Sigmoid colon (tissue), 7 donors: ENCODE measurements at regions of chr1 and their contacts with region 1.

Region 1: DNA sequence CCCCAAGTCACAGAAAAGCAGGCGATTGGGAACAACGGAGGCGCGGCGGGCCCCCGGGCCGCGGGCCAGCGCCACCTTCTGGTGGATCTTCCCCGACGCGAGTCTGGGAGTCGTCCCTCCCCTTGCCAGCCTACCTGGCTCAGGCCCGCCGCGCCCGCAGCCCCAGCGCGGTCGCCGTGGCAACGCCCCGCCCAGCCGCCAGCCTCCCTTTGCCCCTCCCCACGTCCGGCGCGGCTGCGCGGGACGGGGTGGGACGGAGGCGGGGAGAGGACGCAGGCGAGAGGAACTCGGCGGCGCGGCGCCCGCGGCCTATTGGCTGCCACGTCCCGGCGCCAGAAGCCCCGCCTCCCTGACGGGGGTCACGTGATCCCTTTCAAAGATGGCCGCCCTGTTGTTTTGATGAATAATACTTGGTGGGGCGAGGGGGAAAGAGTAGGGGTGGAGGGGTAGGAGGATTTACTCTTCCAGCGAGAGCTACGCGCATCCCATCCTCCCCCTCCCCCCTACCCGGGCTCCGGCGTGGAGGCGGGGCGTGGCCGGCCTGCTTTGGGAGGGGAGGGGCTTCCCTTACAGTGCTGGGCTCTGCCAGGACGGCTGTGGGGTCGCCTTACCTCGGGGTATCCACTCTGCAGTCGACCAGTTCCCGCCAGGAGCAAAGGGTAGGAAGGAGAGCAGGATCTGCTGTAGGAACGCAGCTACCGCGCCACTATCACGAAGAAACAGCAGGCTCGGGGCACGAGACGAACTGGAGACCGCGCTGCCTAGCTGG is at the start of gene UBE4B:
- DNase-seq: peak; percentile 98
- H3K4me3 ChIP-seq: peak within 1 kb of the TSS; percentile 95 to 97 (median 96)
- H3K27ac ChIP-seq: peak within 1 kb of the TSS; percentile 91 to 98 (median 96)
- H3K4me1 ChIP-seq: peaks cover 0 to 28% (median 21%) of the 10 kb centered on the region in 4 donors
- H3K27me3 ChIP-seq: no peaks in the 10 kb centered on the region
- CTCF ChIP-seq: peak in 3 of 4 experiments; percentile 58 to 75 (median 69)
- EP300 ChIP-seq: no peak
- POLR2A ChIP-seq: peak in 1 of 2 donors; percentile 33
- total RNA-seq, gene UBE4B: 47.8 to 124 (median 59.4) TPM

Region 2: GRCh38 chr1:9874959-9875635 is 157.7 kb before region 1 on chr1:
- intact Hi-C with region 1: loop called (anchors 1 kb)
- DNase-seq: peak; percentile 83
- H3K4me3 ChIP-seq: peak overlapping the region in 3 of 4 donors; percentile 6 to 39 (median 33)
- H3K27ac ChIP-seq: peak overlapping the region; percentile 19 to 64 (median 56)
- H3K4me1 ChIP-seq: peaks cover 0 to 17% (median 9%) of the 10 kb centered on the region in 4 donors
- H3K27me3 ChIP-seq: no peaks in the 10 kb centered on the region
- CTCF ChIP-seq: peak; percentile 78 to 95 (median 92)
- EP300 ChIP-seq: no peak
- POLR2A ChIP-seq: no peak

Region 3: GRCh38 chr1:10007169-10007568 is 25.6 kb before region 1 on chr1:
- intact Hi-C with region 1: no loop called
- DNase-seq: no peak
- H3K4me3 ChIP-seq: no peak overlapping the region
- H3K27ac ChIP-seq: no peak overlapping the region
- H3K4me1 ChIP-seq: no peaks in the 10 kb centered on the region
- H3K27me3 ChIP-seq: peaks cover 0 to under 1% (median 0%) of the 10 kb centered on the region in 3 donors
- CTCF ChIP-seq: no peak
- EP300 ChIP-seq: no peak
- POLR2A ChIP-seq: no peak

Region 4: DNA sequence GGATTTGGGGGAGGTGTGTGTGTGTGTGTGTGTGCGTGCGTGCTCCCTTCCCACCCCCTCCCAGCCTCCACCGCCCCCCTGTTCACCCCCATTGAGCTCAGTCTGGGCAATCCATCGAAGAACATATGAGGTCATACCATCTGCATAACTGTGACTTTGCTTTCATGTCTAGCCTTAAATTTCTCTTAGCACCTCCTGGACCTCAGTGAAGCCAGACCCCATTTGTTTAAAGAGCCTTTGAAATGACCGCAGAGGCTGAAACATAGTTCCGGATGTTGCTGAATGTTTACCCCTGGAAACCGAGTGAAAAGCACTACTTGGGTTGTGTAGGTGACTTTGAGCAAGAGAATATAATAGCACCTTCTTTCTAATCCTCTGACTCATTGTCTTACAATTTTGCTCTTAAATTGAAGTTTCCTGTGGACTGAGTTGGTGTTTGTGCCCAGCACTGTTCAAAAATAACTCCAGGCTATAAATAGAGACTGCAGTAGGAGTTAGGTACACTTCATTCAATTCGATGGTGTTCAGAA is 75.4 kb after region 1 on chr1:
- intact Hi-C with region 1: loop called (anchors 2 kb)
- DNase-seq: no peak
- H3K4me3 ChIP-seq: peak overlapping the region in 1 of 4 donors; percentile 12
- H3K27ac ChIP-seq: peak overlapping the region; percentile 71 to 93 (median 84)
- H3K4me1 ChIP-seq: peaks cover 0 to 41% (median 29%) of the 10 kb centered on the region in 4 donors
- H3K27me3 ChIP-seq: no peaks in the 10 kb centered on the region
- CTCF ChIP-seq: no peak
- EP300 ChIP-seq: peak in 1 of 4 donors; percentile 43
- POLR2A ChIP-seq: no peak